ENCODE measurements at regions of chr17 and their contacts with region 1.

Region 1: GRCh38 chr17:5373112-5373511 is 46.4 kb downstream of the NUP88 start:
- DNase-seq: peak; percentile 36 to 57
- ATAC-seq: peak; percentile 96 to 99
- H3K4me3 ChIP-seq: no peak overlapping the region
- H3K27ac ChIP-seq: peak overlapping the region; percentile 68 to 76 (median 74)
- H3K4me1 ChIP-seq: peaks cover 0 to 4% of the 10 kb centered on the region in 2 donors
- H3K27me3 ChIP-seq: no peaks in the 10 kb centered on the region
- CTCF ChIP-seq: no peak
- POLR2A ChIP-seq: no peak

Region 2: DNA sequence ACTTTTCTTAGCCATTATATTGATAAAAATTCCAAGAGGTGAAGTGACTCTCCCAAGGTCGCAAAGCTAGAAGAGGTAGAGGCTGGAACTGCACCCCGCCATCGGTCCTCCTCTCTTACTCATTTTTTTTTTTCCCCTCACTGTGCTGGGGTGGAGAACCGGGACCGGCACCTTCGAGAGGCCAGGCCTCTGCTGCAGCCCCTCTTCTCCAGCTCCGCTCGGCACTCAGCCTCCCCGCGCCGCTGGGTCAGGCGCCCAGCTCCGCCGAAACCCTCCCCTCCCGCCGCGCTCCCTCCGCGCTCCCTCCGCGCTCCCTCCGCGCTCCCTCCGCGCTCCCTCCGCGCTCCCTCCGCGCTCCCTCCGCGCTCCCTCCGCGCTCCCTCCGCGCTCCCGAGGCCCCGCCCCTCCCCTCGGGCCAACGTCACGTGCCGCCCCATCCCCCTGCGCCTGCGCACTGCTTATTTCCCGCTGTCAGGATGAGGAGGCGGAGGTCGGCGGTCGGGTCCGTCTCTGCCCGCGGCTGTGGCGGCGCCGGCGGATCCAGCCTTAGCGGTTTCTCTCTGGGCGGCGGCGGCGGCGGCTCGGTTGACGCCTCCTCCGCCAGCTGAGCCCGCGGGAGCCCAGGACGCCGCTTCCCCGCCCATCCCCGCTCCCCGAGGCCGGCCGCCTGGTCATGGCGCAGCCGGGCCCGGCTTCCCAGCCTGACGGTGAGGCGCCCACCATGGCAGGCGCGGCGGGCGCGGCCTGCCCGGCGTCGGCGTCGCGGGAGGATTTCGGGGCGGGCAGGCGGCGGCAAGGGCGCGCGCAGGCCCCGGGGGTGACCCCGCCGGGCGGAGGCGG is 91.1 kb before region 1 on chr17 and contains the start of gene RABEP1:
- in situ Hi-C with region 1: no loop called
- intact Hi-C with region 1: loop called (anchors 5 kb)
- DNase-seq: peak; percentile 85 to 88
- ATAC-seq: peak; percentile 90 to 91
- H3K4me3 ChIP-seq: peak within 1 kb of the TSS; percentile 72 to 82 (median 76)
- H3K27ac ChIP-seq: peak within 1 kb of the TSS; percentile 93 to 98 (median 97)
- H3K4me1 ChIP-seq: peaks cover 28 to 36% of the 10 kb centered on the region in 2 donors
- H3K27me3 ChIP-seq: no peaks in the 10 kb centered on the region
- CTCF ChIP-seq: peak; percentile 7 to 53 (median 32)
- POLR2A ChIP-seq: peak; percentile 96 to 97
- total RNA-seq, gene RABEP1: 55.4 to 94.8 (median 87.2) TPM

Region 3: GRCh38 chr17:5644065-5644464 is 271.0 kb after region 1 on chr17:
- in situ Hi-C with region 1: no loop called
- intact Hi-C with region 1: no loop called
- DNase-seq: peak in 1 of 2 donors; percentile 18
- ATAC-seq: peak in 1 of 2 donors; percentile 53
- H3K4me3 ChIP-seq: no peak overlapping the region
- H3K27ac ChIP-seq: no peak overlapping the region
- H3K4me1 ChIP-seq: peaks cover 5 to 7% of the 10 kb centered on the region in 2 donors
- H3K27me3 ChIP-seq: no peaks in the 10 kb centered on the region
- CTCF ChIP-seq: no peak
- POLR2A ChIP-seq: no peak

Measured in gastrocnemius medialis (tissue), 4 donors.